Activated naive CD4-positive, alpha-beta T cell treated with anti-CD3 and anti-CD28 coated beads for 36 hours (primary cell): ENCODE measurements at regions of chr1 and their contacts with region 1.

Region 1: DNA sequence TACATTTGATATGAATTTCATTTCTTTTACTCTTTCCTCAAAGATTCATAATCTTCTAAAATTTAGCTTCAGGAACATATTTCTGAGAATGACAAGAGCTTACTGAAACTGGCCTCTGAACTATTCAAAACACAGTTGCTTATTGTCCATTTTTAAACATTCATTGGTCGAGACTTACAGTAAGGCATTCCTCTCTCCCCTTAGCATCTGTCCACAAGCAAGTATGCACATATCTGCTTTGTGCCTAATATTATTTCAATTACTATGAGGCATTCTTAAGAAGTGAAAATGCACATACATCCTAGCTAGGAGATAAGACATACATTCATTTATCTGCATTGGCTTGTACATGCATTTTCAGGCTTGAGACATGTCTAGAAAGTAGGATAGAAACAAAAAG is 488.7 kb downstream of the PTBP2 start:
- DNase-seq: no peak
- H3K4me3 Mint-ChIP-seq: no peak overlapping the region
- H3K27ac Mint-ChIP-seq: no peak overlapping the region
- H3K4me1 Mint-ChIP-seq: no peaks in the 10 kb centered on the region
- H3K27me3 Mint-ChIP-seq: no peaks in the 10 kb centered on the region

Region 2: GRCh38 chr1:97632075-97632474 is 421.8 kb after region 1 on chr1:
- CTCF ChIA-PET with region 1: no interaction called
- intact Hi-C with region 1: loop called (anchors 10 kb)
- DNase-seq: no peak
- H3K4me3 Mint-ChIP-seq: no peak overlapping the region
- H3K27ac Mint-ChIP-seq: no peak overlapping the region
- H3K4me1 Mint-ChIP-seq: peaks cover 7% of the 10 kb centered on the region
- H3K27me3 Mint-ChIP-seq: no peaks in the 10 kb centered on the region